ENCODE measurements at regions of chr3 and their contacts with region 1.

Region 1: DNA sequence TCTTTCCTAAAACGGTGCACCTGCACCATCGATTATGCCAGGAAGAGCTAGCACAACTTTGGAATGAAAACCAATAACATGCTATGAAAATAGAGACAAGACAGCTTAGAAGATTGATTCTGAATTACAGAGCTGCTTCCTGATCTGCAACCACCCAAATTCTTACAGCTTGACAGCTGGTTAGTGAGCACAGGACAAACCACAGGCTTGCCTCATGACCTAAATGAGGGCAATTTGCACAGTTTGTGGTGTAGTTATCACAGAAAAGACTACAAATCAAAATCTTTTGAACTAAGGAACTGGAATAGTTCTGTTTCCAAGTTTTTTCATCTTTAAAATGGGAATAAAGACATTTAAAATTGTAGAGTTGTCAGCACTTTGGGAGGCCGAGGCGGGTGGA is 533.5 kb downstream of the NAALADL2 start:
- DNase-seq: no peak
- ATAC-seq: 0 out of 3 replicates have a peak, but pooled peaks have one; percentile 23
- H3K4me3 ChIP-seq: no peak overlapping the region
- H3K27ac ChIP-seq: no peak overlapping the region
- H3K4me1 ChIP-seq: no peaks in the 10 kb centered on the region
- H3K27me3 ChIP-seq: no peaks in the 10 kb centered on the region
- CTCF ChIP-seq: no peak
- EP300 ChIP-seq: no peak
- POLR2A ChIP-seq: no peak
- RAD21 ChIP-seq: no peak

Region 2: GRCh38 chr3:175378348-175378747 is 14.3 kb before region 1 on chr3:
- CTCF ChIA-PET with region 1: no interaction called
- POLR2A ChIA-PET with region 1: no interaction called
- RAD21 ChIA-PET with region 1: interaction called, 5 read pairs
- SMC1A ChIA-PET with region 1: interaction called, 10 read pairs
- in situ Hi-C with region 1: no loop called
- intact Hi-C with region 1: no loop called
- DNase-seq: peak; percentile 39
- ATAC-seq: peak; percentile 96
- H3K4me3 ChIP-seq: no peak overlapping the region
- H3K27ac ChIP-seq: no peak overlapping the region
- H3K4me1 ChIP-seq: no peaks in the 10 kb centered on the region
- H3K27me3 ChIP-seq: no peaks in the 10 kb centered on the region
- CTCF ChIP-seq: no peak
- EP300 ChIP-seq: no peak
- POLR2A ChIP-seq: no peak
- RAD21 ChIP-seq: no peak

Region 3: DNA sequence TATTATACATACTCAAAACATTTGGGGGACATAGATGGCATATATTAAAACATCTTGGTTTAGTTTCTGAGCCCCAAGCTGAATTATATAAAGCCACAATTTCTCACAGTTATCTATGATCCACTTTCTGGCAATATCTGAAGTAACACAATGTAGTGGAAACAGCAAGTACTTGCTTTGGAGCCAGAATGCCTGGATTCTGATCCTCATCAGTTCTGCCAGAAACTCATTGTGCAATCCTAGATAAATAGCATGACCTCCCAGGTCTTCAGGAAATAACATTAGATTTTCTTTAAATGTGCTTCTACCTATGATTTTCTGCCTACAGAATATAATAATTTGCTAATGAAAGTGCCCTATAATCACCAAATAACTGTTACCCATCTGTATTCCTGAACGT is 11.4 kb after region 1 on chr3:
- CTCF ChIA-PET with region 1: interaction called, 7 read pairs
- POLR2A ChIA-PET with region 1: interaction called, 3 read pairs
- RAD21 ChIA-PET with region 1: interaction called, 3 read pairs
- SMC1A ChIA-PET with region 1: interaction called, 25 read pairs
- in situ Hi-C with region 1: no loop called
- intact Hi-C with region 1: no loop called
- DNase-seq: no peak
- ATAC-seq: no peak
- H3K4me3 ChIP-seq: no peak overlapping the region
- H3K27ac ChIP-seq: no peak overlapping the region
- H3K4me1 ChIP-seq: no peaks in the 10 kb centered on the region
- H3K27me3 ChIP-seq: no peaks in the 10 kb centered on the region
- CTCF ChIP-seq: no peak
- EP300 ChIP-seq: no peak
- POLR2A ChIP-seq: no peak
- RAD21 ChIP-seq: no peak

Region 4: GRCh38 chr3:175655351-175655750 is 262.7 kb after region 1 on chr3:
- CTCF ChIA-PET with region 1: no interaction called
- POLR2A ChIA-PET with region 1: no interaction called
- RAD21 ChIA-PET with region 1: no interaction called
- SMC1A ChIA-PET with region 1: no interaction called
- in situ Hi-C with region 1: no loop called
- intact Hi-C with region 1: no loop called
- DNase-seq: no peak
- ATAC-seq: no peak
- H3K4me3 ChIP-seq: no peak overlapping the region
- H3K27ac ChIP-seq: no peak overlapping the region
- H3K4me1 ChIP-seq: no peaks in the 10 kb centered on the region
- H3K27me3 ChIP-seq: no peaks in the 10 kb centered on the region
- CTCF ChIP-seq: no peak
- EP300 ChIP-seq: no peak
- POLR2A ChIP-seq: no peak
- RAD21 ChIP-seq: no peak

Measured in GM12878 (cell line).